Endothelial cell of umbilical vein (primary cell): ENCODE measurements at regions of chr2 and their contacts with region 1.

Region 1: GRCh38 chr2:48420512-48421197 is 109.3 kb upstream of the STON1 start:
- DNase-seq: peak; percentile 85
- H3K4me3 ChIP-seq: peak overlapping the region in 1 of 3 experiments; percentile 8
- H3K27ac ChIP-seq: peak overlapping the region; percentile 39
- H3K4me1 ChIP-seq: peaks cover 5% of the 10 kb centered on the region
- H3K27me3 ChIP-seq: no peaks in the 10 kb centered on the region
- CTCF ChIP-seq: peak; percentile 88 to 93
- POLR2A ChIP-seq: no peak

Region 2: GRCh38 chr2:48205137-48205798 is 215.4 kb before region 1 on chr2:
- CTCF ChIA-PET with region 1: interaction called, 4 read pairs
- POLR2A ChIA-PET with region 1: no interaction called
- dilution Hi-C with region 1: no loop called
- intact Hi-C with region 1: loop called (anchors 5 kb)
- DNase-seq: no peak
- H3K4me3 ChIP-seq: no peak overlapping the region
- H3K27ac ChIP-seq: no peak overlapping the region
- H3K4me1 ChIP-seq: peaks cover 14% of the 10 kb centered on the region
- H3K27me3 ChIP-seq: no peaks in the 10 kb centered on the region
- CTCF ChIP-seq: no peak
- POLR2A ChIP-seq: no peak

Region 3: GRCh38 chr2:48383046-48383445 is 37.6 kb before region 1 on chr2:
- CTCF ChIA-PET with region 1: no interaction called
- POLR2A ChIA-PET with region 1: no interaction called
- dilution Hi-C with region 1: no loop called
- intact Hi-C with region 1: loop called (anchors 2 kb)
- DNase-seq: no peak
- H3K4me3 ChIP-seq: no peak overlapping the region
- H3K27ac ChIP-seq: no peak overlapping the region
- H3K4me1 ChIP-seq: peaks cover 10% of the 10 kb centered on the region
- H3K27me3 ChIP-seq: no peaks in the 10 kb centered on the region
- CTCF ChIP-seq: no peak
- POLR2A ChIP-seq: no peak